ENCODE measurements at regions of chr4 and their contacts with region 1.

Region 1: GRCh38 chr4:115249808-115250207 is 136.4 kb upstream of the NDST4 start:
- DNase-seq: no peak
- ATAC-seq: no peak

Region 2: GRCh38 chr4:114879916-114880669 is 369.7 kb before region 1 on chr4:
- intact Hi-C with region 1: no loop called
- DNase-seq: no peak
- ATAC-seq: no peak

Region 3: GRCh38 chr4:115171220-115171619 is 78.6 kb before region 1 on chr4:
- intact Hi-C with region 1: loop called (anchors 2 kb)
- DNase-seq: no peak
- ATAC-seq: no peak

Region 4: GRCh38 chr4:115234405-115235093 is 15.3 kb before region 1 on chr4:
- intact Hi-C with region 1: no loop called
- DNase-seq: no peak
- ATAC-seq: no peak

Region 5: GRCh38 chr4:115310641-115311040 is 60.8 kb after region 1 on chr4:
- intact Hi-C with region 1: no loop called
- DNase-seq: no peak
- ATAC-seq: no peak

Region 6: GRCh38 chr4:116374815-116375214 is 1125.0 kb after region 1 on chr4:
- intact Hi-C with region 1: no loop called
- DNase-seq: no peak
- ATAC-seq: no peak